HCT116 (cell line): ENCODE measurements at regions of chr19 and their contacts with region 1.

Region 1: GRCh38 chr19:46529622-46530462 is 34.2 kb upstream of the PNMA8B start:
- DNase-seq: no peak
- ATAC-seq: peak; percentile 81
- H3K4me3 ChIP-seq: peak overlapping the region; percentile 9 to 37; a peak in 3 of 4 replicates
- H3K27ac ChIP-seq: no peak overlapping the region
- H3K4me1 ChIP-seq: peaks cover 5 to 16% of the 10 kb centered on the region in 2 experiments; a peak in 3 of 4 replicates
- H3K27me3 ChIP-seq: no peaks in the 10 kb centered on the region
- CTCF ChIP-seq: peak; percentile 91 to 96 (median 91)
- POLR2A ChIP-seq: no peak
- RAD21 ChIP-seq: peak; percentile 97

Region 2: DNA sequence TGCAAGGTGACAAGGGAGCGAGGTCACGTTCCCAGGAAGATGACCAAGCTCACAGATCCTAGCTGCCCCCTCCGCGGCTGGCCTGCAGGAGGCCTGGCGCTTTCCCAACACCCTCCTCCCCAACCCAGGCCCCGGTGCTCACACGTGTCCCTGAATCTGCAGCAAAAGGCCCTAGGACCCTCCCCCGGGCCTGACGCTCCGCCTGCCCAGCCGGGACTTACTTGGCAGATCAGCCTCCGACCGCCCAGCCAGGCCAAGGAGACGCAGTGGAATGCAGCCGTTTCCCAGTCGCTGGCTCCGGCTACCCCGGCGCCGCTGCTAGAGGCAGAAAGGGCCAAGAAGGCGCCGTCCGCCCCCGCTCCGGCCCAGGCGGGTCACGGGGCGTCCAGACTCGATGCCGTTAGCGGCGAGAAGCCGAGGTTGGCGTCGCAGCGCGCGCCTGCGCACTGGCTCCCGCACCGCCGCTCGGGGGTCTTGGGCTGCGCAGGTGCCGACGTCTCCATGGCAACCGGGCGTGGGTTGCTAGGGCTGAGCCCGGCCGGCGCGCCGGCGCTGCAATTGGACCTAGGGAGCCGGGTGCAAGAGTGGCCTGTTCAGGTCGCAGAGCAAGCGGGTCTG is 58.6 kb before region 1 on chr19 and contains the start of gene PNMA8A:
- CTCF ChIA-PET with region 1: no interaction called
- POLR2A ChIA-PET with region 1: no interaction called
- RAD21 ChIA-PET with region 1: no interaction called
- intact Hi-C with region 1: no loop called
- DNase-seq: no peak
- ATAC-seq: no peak
- H3K4me3 ChIP-seq: no peak within 1 kb of the TSS
- H3K27ac ChIP-seq: no peak within 1 kb of the TSS
- H3K4me1 ChIP-seq: no peaks in the 10 kb centered on the region
- H3K27me3 ChIP-seq: 0 out of 2 replicates have a peak, but pooled peaks cover 6% of the 10 kb centered on the region
- CTCF ChIP-seq: no peak
- POLR2A ChIP-seq: no peak
- RAD21 ChIP-seq: no peak
- total RNA-seq, gene PNMA8A: not detected

Region 3: GRCh38 chr19:46542428-46543230 is 12.8 kb after region 1 on chr19:
- CTCF ChIA-PET with region 1: interaction called, 83 read pairs
- POLR2A ChIA-PET with region 1: interaction called, 3 read pairs
- RAD21 ChIA-PET with region 1: interaction called, 3 to 5 read pairs
- intact Hi-C with region 1: loop called (anchors 1 kb)
- DNase-seq: peak; percentile 86
- ATAC-seq: peak; percentile 88
- H3K4me3 ChIP-seq: no peak overlapping the region
- H3K27ac ChIP-seq: no peak overlapping the region
- H3K4me1 ChIP-seq: peaks cover 4 to 6% of the 10 kb centered on the region in 2 experiments; a peak in 3 of 4 replicates
- H3K27me3 ChIP-seq: no peaks in the 10 kb centered on the region
- CTCF ChIP-seq: peak; percentile 72 to 97 (median 89)
- POLR2A ChIP-seq: no peak
- RAD21 ChIP-seq: peak; percentile 90

Region 4: DNA sequence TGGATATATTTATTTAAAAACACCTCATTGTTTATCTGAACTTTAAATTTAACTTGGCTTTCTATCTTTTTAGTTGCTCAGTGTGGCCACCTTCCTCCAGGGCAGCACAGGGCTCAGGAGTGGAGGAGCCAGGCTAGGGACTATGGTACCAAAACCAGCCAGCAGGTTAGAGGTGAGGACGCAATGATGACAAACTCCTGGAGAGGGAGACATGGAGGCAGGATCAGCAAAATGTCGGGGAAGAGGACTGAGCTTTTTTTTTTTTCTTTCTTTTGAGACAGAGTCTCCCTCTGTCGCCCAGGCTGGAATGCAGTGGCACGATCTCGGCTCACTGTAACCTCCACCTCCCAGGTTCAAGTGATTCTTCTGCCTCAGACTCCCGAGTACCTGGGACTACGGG is 41.7 kb after region 1 on chr19:
- CTCF ChIA-PET with region 1: no interaction called
- POLR2A ChIA-PET with region 1: no interaction called
- RAD21 ChIA-PET with region 1: no interaction called
- intact Hi-C with region 1: loop called (anchors 1 kb)
- DNase-seq: peak; percentile 46
- ATAC-seq: peak; percentile 95
- H3K4me3 ChIP-seq: no peak overlapping the region
- H3K27ac ChIP-seq: no peak overlapping the region
- H3K4me1 ChIP-seq: peaks cover 9 to 17% of the 10 kb centered on the region in 2 experiments
- H3K27me3 ChIP-seq: no peaks in the 10 kb centered on the region
- CTCF ChIP-seq: peak; percentile 24 to 50 (median 36); a peak in 5 of 6 replicates
- POLR2A ChIP-seq: no peak
- RAD21 ChIP-seq: peak; percentile 22; the same call in 1 of the 2 replicates

Region 5: GRCh38 chr19:46661020-46661731 is 131.3 kb after region 1 on chr19 and contains the start of gene DACT3:
- CTCF ChIA-PET with region 1: interaction called, 26 read pairs
- POLR2A ChIA-PET with region 1: no interaction called
- RAD21 ChIA-PET with region 1: interaction called in 1 of 2 experiments, 3 read pairs
- intact Hi-C with region 1: loop called (anchors 1 kb)
- DNase-seq: peak; percentile 99
- ATAC-seq: peak; percentile 93
- H3K4me3 ChIP-seq: peak within 1 kb of the TSS; percentile 39 to 59
- H3K27ac ChIP-seq: no peak within 1 kb of the TSS; the same call in 1 of the 2 replicates
- H3K4me1 ChIP-seq: peaks cover 14 to 29% of the 10 kb centered on the region in 2 experiments
- H3K27me3 ChIP-seq: no peaks in the 10 kb centered on the region
- CTCF ChIP-seq: no peak
- POLR2A ChIP-seq: no peak
- RAD21 ChIP-seq: no peak
- total RNA-seq, gene DACT3: 2.0 TPM

Region 6: GRCh38 chr19:46746281-46747013 is 216.6 kb after region 1 on chr19 and contains the start of gene STRN4:
- CTCF ChIA-PET with region 1: no interaction called
- POLR2A ChIA-PET with region 1: no interaction called
- RAD21 ChIA-PET with region 1: no interaction called
- intact Hi-C with region 1: loop called (anchors 2 kb)
- DNase-seq: no peak
- ATAC-seq: peak; percentile 70
- H3K4me3 ChIP-seq: peak within 1 kb of the TSS; percentile 98 to 99
- H3K27ac ChIP-seq: peak within 1 kb of the TSS; percentile 95
- H3K4me1 ChIP-seq: peaks cover 5 to 20% of the 10 kb centered on the region in 2 experiments
- H3K27me3 ChIP-seq: no peaks in the 10 kb centered on the region
- CTCF ChIP-seq: no peak
- POLR2A ChIP-seq: peak; percentile 41
- RAD21 ChIP-seq: no peak
- total RNA-seq, gene STRN4: 107 TPM